ENCODE measurements at regions of chr4 and their contacts with region 1.

Region 1: GRCh38 chr4:88533937-88534750 is 10.6 kb upstream of the PYURF start:
- H3K4me3 ChIP-seq: no peak overlapping the region
- H3K27ac ChIP-seq: no peak overlapping the region
- H3K4me1 ChIP-seq: no peaks in the 10 kb centered on the region
- CTCF ChIP-seq: no peak

Region 2: DNA sequence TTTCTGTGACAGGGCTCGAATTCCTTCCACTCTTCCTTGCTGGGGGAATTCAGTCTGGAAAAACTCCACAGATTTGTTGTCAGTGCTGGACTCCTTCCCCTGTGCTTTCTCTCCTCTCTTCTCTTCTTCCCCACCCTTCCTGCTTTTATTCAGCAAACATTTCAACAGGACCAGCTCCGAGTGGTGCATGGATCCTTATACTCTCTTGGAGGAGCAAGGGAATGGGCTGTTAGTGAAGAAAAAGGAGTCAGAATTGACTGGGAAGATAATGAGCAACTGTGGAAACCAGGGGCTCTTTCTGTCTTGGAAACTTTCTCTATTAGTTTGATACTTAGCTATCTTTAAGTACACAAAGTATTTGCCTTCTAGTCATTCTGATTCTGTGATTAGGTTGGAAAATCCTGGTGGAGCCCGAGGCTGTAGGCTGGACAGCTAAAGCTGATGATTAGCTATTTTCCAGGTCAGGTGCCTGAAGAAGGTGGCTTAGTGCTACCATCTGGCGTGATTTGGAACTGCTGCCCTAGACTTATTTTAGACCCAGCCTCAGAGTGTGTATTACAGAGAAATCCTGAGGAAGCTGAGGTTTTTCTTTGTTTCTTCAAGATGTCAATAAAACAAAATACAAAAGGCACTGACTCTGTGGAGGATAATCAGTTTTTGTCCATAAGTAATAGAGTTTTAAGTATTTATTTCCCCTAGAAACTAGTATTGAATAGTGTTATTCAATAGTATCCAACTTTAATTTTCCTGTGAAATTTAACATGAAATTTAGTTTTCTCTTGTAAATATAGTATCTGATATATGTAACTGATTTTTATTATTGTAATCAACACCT is 125.1 kb after region 1 on chr4:
- CTCF ChIA-PET with region 1: interaction called, 16 read pairs
- POLR2A ChIA-PET with region 1: no interaction called
- H3K4me3 ChIP-seq: no peak overlapping the region
- H3K27ac ChIP-seq: no peak overlapping the region
- H3K4me1 ChIP-seq: no peaks in the 10 kb centered on the region
- CTCF ChIP-seq: no peak